ENCODE measurements at regions of chr19 and their contacts with region 1.

Region 1: GRCh38 chr19:42325273-42325895 is at the start of gene MEGF8:
- DNase-seq: peak; percentile 99
- ATAC-seq: peak; percentile 98
- H3K4me3 ChIP-seq: peak within 1 kb of the TSS; percentile 67 to 69
- H3K27ac ChIP-seq: no peak within 1 kb of the TSS
- H3K4me1 ChIP-seq: no peaks in the 10 kb centered on the region
- H3K27me3 ChIP-seq: no peaks in the 10 kb centered on the region
- total RNA-seq, gene MEGF8: 17.5 to 26.4 TPM

Region 2: GRCh38 chr19:42396381-42397262 is 71.2 kb after region 1 on chr19:
- intact Hi-C with region 1: loop called in 1 of 2 experiments (anchors 5 kb)
- DNase-seq: peak; percentile 99
- ATAC-seq: peak; percentile 98
- H3K4me3 ChIP-seq: peak overlapping the region; percentile 4 to 8
- H3K27ac ChIP-seq: peak overlapping the region in 1 of 2 donors; percentile 30
- H3K4me1 ChIP-seq: no peaks in the 10 kb centered on the region
- H3K27me3 ChIP-seq: no peaks in the 10 kb centered on the region

Measured in aorta (tissue), 5 donors.